ENCODE measurements at regions of chr6 and their contacts with region 1.

Region 1: GRCh38 chr6:43228951-43229802 is at the start of gene DNPH1:
- DNase-seq: no peak
- H3K4me3 ChIP-seq: peak within 1 kb of the TSS; percentile 70
- CTCF ChIP-seq: peak; percentile 62

Region 2: DNA sequence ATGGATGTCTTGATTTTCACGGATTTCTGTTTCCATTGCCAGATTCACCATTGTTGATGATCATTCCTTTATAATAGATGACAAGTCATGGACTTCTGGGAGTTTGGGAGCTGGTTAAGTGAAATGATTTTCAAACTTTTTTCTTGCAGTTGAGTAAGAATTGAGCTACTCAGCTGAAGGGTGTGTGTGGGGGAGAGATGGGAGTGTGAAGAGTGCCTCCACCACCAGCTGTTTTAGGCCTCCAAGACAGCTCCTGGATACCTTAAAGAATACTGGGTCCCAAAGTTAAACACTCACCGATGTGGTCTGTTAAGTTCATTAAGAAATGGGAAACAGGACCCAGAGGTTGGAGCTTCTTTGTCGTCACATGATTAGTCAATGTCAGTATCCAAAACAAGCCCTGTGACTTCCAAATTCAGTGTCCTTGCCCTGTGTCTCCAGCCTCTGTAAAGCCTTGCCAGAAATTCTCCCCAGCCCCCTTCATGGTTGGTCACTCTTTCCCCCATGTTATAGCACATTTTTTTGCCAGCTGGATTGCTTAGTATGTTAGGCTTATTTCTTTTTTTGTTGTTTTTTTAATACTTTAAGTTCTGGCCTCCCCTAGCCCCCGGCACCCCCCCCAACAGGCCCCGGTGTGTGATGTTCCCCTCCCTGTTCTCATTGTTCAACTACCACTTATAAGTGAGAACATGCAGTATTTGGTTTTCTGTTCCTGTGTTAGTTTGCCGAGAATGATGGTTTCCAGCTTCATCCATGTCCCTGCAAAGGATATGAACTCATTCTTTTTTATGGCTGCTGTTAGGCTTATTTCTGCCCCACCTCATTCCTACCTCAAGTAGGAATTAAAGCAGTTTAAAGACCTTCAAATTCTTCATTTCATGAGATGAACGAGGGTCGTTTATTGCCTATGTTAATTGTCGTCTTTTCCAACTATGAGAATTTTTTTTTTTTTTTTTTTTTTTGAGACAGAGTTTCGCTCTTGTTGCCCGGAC is 420.4 kb before region 1 on chr6:
- CTCF ChIA-PET with region 1: no interaction called
- POLR2A ChIA-PET with region 1: no interaction called
- DNase-seq: no peak
- H3K4me3 ChIP-seq: no peak overlapping the region
- CTCF ChIP-seq: no peak

Region 3: GRCh38 chr6:42879372-42880239 is 349.6 kb before region 1 on chr6 and contains the start of gene RPL7L1:
- CTCF ChIA-PET with region 1: no interaction called
- POLR2A ChIA-PET with region 1: no interaction called
- DNase-seq: peak; percentile 38
- H3K4me3 ChIP-seq: peak within 1 kb of the TSS; percentile 83
- CTCF ChIP-seq: peak; percentile 1

Region 4: DNA sequence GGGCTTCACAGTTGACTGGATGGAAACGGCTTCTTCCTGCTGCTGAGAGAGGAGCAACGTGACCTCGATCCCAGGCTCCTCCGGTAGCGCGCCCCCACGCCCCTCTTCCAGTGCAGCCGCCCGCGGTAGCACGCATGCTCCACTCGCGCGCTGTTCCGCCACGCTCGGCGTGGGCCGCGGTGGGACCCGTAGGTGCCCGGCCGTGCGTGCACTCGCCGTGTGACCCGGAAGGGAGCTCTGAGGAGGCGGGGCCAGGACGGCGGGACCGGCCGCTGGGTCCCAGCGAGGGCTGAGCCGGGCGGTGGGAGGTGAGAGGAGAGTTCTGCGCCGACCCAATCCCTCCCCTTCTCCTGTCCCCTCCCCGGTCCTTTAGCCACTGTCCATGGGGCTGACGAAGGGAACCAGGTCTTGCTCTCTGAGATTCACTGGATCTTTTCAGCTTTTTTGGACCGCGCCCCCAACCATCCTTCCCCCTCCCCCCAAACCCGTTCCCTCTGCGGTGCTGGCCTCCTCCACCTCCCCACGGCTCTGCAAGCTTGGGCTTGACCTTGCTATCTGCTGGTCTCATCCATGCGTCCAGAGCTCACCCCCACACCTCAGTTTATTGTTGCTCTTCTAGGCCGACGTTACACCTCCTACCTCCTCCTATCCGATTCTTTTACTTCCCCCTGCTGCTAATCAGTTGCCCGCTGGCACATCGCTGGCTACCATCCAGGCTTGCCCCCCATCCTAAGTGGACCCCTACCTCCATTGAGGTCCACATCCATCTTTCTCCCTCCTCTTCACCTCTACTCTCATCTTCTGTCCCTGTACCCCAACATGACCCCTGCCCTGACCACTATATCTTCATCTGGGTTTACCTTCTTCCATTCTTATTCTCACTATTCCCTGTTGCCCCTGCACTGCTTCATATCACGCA is 47.0 kb before region 1 on chr6 and contains the start of gene CUL9:
- CTCF ChIA-PET with region 1: interaction called, 11 read pairs
- POLR2A ChIA-PET with region 1: no interaction called
- DNase-seq: no peak
- H3K4me3 ChIP-seq: peak within 1 kb of the TSS; percentile 75
- CTCF ChIP-seq: no peak

Region 5: GRCh38 chr6:43247113-43247999 is 18.2 kb after region 1 on chr6:
- CTCF ChIA-PET with region 1: interaction called, 14 read pairs
- POLR2A ChIA-PET with region 1: no interaction called
- DNase-seq: no peak
- H3K4me3 ChIP-seq: peak overlapping the region; percentile 44
- CTCF ChIP-seq: no peak

Region 6: GRCh38 chr6:43297644-43298564 is 68.7 kb after region 1 on chr6 and contains the start of gene SLC22A7:
- CTCF ChIA-PET with region 1: interaction called, 14 read pairs
- POLR2A ChIA-PET with region 1: no interaction called
- DNase-seq: no peak
- H3K4me3 ChIP-seq: no peak within 1 kb of the TSS
- CTCF ChIP-seq: no peak

Region 7: DNA sequence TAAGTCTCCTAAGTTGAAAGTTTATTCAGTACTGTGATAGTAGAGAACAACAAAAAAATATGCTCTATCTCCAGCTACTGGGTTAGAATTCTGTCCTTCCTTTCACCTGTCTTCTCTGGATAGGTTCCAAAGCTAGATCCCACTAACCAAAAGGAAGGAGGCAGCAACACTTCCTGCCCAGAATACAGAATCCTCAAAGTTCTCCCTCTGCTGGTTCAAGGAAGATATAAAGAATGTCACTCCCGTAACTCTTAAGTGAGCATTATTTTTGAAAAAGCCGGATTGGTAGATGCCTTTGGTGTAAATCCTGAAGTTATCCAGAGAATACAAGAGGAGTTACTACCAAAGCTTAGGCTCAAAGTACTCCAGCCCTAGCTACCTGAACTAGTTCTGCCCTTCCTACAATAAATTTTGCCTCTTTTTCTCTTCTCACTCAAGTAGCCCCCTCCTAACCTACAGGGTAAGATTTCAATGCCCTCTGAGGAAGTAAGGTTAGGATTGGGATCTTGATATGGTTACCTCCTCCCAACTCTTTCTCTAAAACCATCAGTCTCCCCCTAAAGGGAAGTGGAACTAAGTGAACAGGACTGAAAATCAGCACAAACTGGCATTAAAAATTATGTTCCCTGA is 105.4 kb after region 1 on chr6:
- CTCF ChIA-PET with region 1: interaction called, 30 read pairs
- POLR2A ChIA-PET with region 1: no interaction called
- DNase-seq: peak; percentile 9
- H3K4me3 ChIP-seq: no peak overlapping the region
- CTCF ChIP-seq: peak; percentile 42

Region 8: DNA sequence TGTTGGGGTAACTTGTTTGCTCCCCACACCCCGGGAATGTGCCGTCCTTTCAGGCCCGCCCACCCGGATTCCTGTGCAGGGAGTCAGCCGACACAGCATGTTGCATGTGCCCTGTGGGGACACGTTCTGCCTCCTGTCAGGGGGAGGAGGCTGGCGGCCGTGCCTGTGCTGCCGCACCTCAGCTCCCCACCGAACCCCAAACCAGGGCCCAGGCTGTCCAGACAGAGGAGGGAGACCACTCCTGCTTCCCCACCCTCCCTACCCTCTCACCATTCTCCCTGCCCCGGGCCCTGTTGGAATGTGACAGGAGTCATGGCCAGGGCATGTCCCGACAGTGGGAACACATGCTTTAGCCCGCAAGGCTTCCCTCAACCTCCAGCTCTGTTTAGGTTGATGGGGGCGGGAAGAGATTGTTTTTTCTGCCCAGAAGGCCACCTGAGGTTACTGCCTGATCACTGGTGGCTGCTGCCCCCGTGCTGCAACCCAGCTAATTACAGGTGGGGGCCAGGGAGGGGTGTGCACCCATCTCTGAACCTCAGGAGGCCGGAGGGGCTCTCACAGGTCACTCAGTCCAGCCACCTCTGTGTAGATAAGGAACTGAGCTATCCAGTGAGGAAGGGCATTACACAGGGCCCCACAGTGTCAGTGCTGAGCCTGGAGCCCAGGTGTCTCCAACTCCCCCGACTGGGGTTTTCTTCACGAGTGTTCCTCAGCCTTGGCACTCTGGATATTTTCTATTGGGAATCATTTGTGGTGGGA is 267.4 kb after region 1 on chr6:
- CTCF ChIA-PET with region 1: interaction called, 17 read pairs
- POLR2A ChIA-PET with region 1: no interaction called
- DNase-seq: no peak
- H3K4me3 ChIP-seq: no peak overlapping the region
- CTCF ChIP-seq: peak; percentile 67

Region 9: DNA sequence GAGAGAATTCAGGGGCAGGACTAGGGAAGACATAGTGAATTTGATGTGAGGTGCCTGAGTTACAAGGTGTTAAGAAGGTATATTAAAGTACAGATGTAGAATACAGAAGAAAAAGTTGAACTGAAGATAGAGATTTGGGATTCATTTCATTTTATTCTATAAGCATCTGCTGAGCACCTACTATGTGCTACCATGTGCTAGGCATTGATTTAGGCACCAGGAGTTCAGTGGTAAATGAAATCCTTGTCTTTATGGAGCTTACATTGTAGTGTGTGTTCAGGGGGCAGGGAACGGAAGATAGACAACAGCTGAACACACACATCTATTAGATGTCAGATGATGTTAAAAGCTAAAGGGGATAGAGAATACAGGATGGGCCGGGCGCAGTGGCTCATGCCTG is 418.4 kb after region 1 on chr6:
- CTCF ChIA-PET with region 1: no interaction called
- POLR2A ChIA-PET with region 1: no interaction called
- DNase-seq: no peak
- H3K4me3 ChIP-seq: no peak overlapping the region
- CTCF ChIP-seq: no peak

Measured in AG04449 (cell line).